Right cardiac atrium (tissue), 5 donors: ENCODE measurements at regions of chr19 and their contacts with region 1.

Region 1: GRCh38 chr19:41218615-41219507 is at the start of gene AXL:
- DNase-seq: peak; percentile 85 to 96 (median 95)
- ATAC-seq: peak; percentile 81 to 88
- H3K4me3 ChIP-seq: peak within 1 kb of the TSS; percentile 60
- H3K27ac ChIP-seq: peak within 1 kb of the TSS; percentile 68
- H3K4me1 ChIP-seq: peaks cover 2% of the 10 kb centered on the region
- H3K27me3 ChIP-seq: no peaks in the 10 kb centered on the region
- total RNA-seq, gene AXL: 30.2 to 43.6 (median 38.5) TPM

Region 2: DNA sequence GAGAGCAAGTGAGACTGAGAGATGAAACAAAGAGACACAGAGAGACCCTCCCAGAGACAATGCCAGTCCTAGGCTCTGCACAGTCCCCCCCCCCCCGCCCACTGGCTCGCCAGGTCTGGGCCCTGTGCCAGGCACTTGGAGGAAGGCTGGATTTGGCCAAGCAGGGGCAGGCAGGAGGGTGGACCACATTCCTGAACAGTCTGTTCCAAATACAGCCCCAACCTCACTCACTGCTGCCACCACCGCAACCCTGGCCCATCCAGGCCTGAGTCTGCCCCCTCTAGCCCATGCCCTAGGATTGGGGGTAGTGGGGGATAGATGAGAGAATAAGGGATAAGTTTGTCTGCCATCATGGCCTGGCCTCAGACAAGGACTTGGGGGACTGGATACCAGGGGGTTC is 85.6 kb before region 1 on chr19:
- intact Hi-C with region 1: no loop called
- DNase-seq: no peak
- ATAC-seq: no peak
- H3K4me3 ChIP-seq: no peak overlapping the region
- H3K27ac ChIP-seq: no peak overlapping the region
- H3K4me1 ChIP-seq: no peaks in the 10 kb centered on the region
- H3K27me3 ChIP-seq: no peaks in the 10 kb centered on the region

Region 3: DNA sequence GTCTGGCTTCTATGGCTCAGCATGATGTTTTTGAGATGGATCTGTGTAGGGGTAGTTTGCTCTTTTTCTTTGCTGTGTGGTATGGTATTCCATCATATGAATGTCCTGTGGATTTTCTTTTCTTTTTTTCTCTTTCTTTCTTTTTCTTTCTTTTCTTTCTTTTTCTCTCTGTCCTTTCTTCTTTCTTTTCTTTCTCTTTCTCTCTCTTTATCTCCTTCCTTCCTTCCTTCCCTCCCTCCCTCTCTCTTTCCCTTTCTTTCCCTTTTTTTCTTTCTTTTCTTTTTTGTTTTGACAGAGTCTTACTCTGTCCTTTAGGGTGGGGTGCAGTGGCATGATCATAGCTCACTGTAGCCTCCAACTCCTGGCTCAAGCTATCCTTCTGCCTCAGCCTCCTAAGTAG is 36.3 kb after region 1 on chr19:
- intact Hi-C with region 1: loop called in 1 of 4 experiments (anchors 5 kb)
- DNase-seq: no peak
- ATAC-seq: no peak
- H3K4me3 ChIP-seq: no peak overlapping the region
- H3K27ac ChIP-seq: no peak overlapping the region
- H3K4me1 ChIP-seq: no peaks in the 10 kb centered on the region
- H3K27me3 ChIP-seq: no peaks in the 10 kb centered on the region

Region 4: GRCh38 chr19:41299755-41300314 is 81.0 kb after region 1 on chr19:
- intact Hi-C with region 1: loop called in 1 of 4 experiments (anchors 5 kb)
- DNase-seq: peak; percentile 79 to 88 (median 87)
- ATAC-seq: peak; percentile 56 to 69
- H3K4me3 ChIP-seq: no peak overlapping the region
- H3K27ac ChIP-seq: peak overlapping the region; percentile 96
- H3K4me1 ChIP-seq: peaks cover 41% of the 10 kb centered on the region
- H3K27me3 ChIP-seq: no peaks in the 10 kb centered on the region